MCF 10A (cell line): ENCODE measurements at regions of chr3 and their contacts with region 1.

Region 1: DNA sequence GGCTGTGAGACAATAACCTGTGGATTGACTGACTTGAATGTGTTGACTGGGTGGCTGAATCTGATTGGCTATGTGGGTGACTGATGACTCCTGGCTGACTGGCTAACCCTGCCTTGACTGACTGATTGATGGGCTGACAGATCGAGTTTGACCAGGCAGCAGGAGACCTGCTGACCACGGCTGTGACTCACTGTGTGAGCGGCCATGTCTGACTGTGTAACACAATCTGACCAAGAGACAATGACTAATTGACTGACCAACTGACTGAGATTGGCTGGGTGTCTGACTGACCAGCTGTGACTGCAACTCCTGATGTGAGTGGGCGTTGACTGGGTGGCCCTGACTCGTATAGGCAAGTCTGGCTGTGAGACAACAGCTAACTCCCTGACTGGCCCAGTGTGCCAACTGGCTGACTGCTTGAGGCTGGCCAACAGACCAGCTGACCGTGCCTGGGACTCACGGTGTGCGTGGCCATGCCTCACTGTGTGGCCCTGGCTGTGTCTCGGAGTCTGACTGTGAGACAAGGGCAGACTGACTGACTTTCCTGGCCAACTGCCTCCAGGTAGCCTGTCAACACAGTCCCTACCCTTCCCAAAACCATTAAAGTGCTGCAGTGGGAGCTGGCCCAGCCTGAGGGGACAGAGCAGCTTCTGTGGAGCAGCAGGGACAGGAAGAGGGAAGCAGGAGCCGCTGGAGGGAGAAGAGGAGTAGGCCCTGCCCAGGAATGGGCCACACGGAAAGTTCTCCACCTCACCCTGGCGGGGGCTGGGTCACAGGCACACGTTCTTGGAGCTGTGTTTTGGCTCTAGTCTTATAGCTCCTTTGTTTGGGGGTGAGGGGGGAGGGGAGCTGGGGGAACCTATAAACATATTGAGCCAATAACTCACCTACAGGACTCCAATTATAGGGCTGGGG is 508.9 kb downstream of the SHQ1 start:
- DNase-seq: peak; percentile 93
- H3K4me3 Mint-ChIP-seq: no peak overlapping the region
- H3K27ac Mint-ChIP-seq: no peak overlapping the region
- H3K4me1 Mint-ChIP-seq: peaks cover 22% of the 10 kb centered on the region
- H3K27me3 Mint-ChIP-seq: no peaks in the 10 kb centered on the region
- CTCF ChIP-seq: no peak

Region 2: DNA sequence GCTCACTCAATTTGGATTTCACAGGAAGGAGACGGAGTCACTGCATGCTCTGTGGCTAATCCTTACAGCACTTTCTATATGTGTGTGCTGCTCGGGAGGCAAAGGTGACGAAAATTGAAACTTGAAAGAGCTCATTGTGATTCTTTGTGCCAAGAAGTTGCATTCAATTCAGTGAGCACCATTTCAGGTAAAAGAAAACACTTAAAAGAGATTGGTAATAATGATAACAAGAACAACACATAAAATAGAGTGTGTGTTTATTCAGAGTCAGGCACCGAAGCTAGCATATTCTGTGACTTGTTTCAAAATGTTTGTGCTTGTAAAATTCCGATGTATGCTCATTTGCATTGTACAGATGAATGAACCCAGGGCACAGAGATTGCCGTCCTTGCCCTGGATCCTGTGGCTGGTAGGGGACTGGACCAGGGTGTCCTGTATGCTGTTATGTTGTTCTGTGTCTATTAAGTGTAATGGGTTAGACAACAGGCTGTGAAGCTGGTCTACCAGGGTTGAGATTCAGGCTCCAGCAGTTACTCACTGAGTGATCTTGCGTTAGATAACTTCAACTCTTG is 361.1 kb before region 1 on chr3:
- CTCF ChIA-PET with region 1: interaction called, 4 read pairs
- POLR2A ChIA-PET with region 1: interaction called, 3 read pairs
- intact Hi-C with region 1: loop called (anchors 2 kb)
- DNase-seq: no peak
- H3K4me3 Mint-ChIP-seq: no peak overlapping the region
- H3K27ac Mint-ChIP-seq: no peak overlapping the region
- H3K4me1 Mint-ChIP-seq: peaks cover 20% of the 10 kb centered on the region
- H3K27me3 Mint-ChIP-seq: peaks cover 63% of the 10 kb centered on the region
- CTCF ChIP-seq: no peak

Region 3: GRCh38 chr3:72163809-72164634 is 175.4 kb before region 1 on chr3:
- CTCF ChIA-PET with region 1: no interaction called
- POLR2A ChIA-PET with region 1: interaction called, 3 read pairs
- intact Hi-C with region 1: loop called (anchors 5 kb)
- DNase-seq: no peak
- H3K4me3 Mint-ChIP-seq: no peak overlapping the region
- H3K27ac Mint-ChIP-seq: no peak overlapping the region
- H3K4me1 Mint-ChIP-seq: peaks cover 21% of the 10 kb centered on the region
- H3K27me3 Mint-ChIP-seq: no peaks in the 10 kb centered on the region
- CTCF ChIP-seq: no peak

Region 4: DNA sequence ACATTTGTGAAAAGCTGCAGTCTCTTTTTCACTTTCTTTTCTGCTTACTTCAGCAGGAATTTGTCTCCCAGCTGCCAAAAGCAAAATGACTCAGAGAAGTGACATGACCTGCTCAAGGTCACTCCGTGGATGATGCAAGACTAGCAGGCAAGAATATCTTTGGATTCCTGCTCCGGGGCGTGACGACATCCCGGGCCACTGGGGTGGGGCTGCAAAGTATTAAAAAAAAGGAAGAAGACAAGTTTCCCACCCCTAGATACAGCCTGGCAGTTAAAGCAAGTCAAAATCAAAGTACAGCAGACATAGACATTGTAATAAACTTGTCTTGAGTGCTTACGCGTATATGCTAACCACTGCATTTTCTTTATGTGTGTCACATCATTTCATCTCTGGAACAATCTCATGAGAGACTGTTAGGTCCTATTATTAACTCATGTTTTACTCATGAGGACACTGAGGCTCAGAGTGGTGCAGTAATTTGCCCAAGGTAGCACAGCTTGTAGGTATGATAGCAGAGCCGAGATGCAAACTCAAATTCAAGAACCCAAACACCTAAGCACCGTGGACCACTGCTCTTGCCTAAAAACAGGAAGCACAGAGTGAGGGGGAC is 69.2 kb before region 1 on chr3:
- CTCF ChIA-PET with region 1: interaction called, 4 read pairs
- POLR2A ChIA-PET with region 1: interaction called, 3 read pairs
- intact Hi-C with region 1: loop called (anchors 5 kb)
- DNase-seq: peak; percentile 93
- H3K4me3 Mint-ChIP-seq: peak overlapping the region; percentile 15
- H3K27ac Mint-ChIP-seq: peak overlapping the region; percentile 88
- H3K4me1 Mint-ChIP-seq: peaks cover 32% of the 10 kb centered on the region
- H3K27me3 Mint-ChIP-seq: peaks cover 7% of the 10 kb centered on the region
- CTCF ChIP-seq: no peak

Region 5: GRCh38 chr3:72327008-72327407 is 12.4 kb before region 1 on chr3:
- CTCF ChIA-PET with region 1: interaction called, 4 read pairs
- POLR2A ChIA-PET with region 1: interaction called, 10 read pairs
- intact Hi-C with region 1: no loop called
- DNase-seq: no peak
- H3K4me3 Mint-ChIP-seq: no peak overlapping the region
- H3K27ac Mint-ChIP-seq: no peak overlapping the region
- H3K4me1 Mint-ChIP-seq: no peaks in the 10 kb centered on the region
- H3K27me3 Mint-ChIP-seq: no peaks in the 10 kb centered on the region
- CTCF ChIP-seq: no peak